Activated CD4-positive, alpha-beta T cell treated with anti-CD3 and anti-CD28 coated beads for 36 hours (primary cell): ENCODE measurements at regions of chr1 and their contacts with region 1.

Region 1: DNA sequence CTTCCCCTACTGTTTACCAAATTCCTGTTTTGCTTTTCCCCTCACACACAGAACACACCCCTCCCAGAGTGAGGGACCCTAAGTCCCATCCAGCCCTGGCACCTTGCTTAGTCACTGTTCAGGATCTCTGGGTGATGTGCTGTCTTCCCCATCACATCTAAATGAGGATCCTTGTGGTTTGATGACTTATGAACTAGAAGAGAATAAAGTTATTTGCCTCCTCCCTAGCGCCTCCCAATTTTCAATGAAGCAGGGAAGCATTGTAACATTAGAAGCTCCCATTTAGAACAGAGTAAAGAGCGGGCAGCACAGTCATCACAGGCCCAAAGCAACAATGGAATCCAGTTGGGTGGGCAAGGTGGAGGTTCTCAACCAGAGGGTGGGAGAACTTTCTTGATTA is 27.0 kb downstream of the DISC1 start:
- DNase-seq: no peak
- ATAC-seq: no peak
- H3K4me3 Mint-ChIP-seq: no peak overlapping the region
- H3K27ac Mint-ChIP-seq: no peak overlapping the region
- H3K4me1 Mint-ChIP-seq: peaks cover 37% of the 10 kb centered on the region
- H3K27me3 Mint-ChIP-seq: no peaks in the 10 kb centered on the region

Region 2: GRCh38 chr1:231643071-231643934 is 10.3 kb before region 1 on chr1:
- CTCF ChIA-PET with region 1: interaction called, 10 read pairs
- POLR2A ChIA-PET with region 1: no interaction called
- intact Hi-C with region 1: no loop called
- DNase-seq: no peak
- ATAC-seq: no peak
- H3K4me3 Mint-ChIP-seq: no peak overlapping the region
- H3K27ac Mint-ChIP-seq: no peak overlapping the region
- H3K4me1 Mint-ChIP-seq: peaks cover 16% of the 10 kb centered on the region
- H3K27me3 Mint-ChIP-seq: no peaks in the 10 kb centered on the region

Region 3: DNA sequence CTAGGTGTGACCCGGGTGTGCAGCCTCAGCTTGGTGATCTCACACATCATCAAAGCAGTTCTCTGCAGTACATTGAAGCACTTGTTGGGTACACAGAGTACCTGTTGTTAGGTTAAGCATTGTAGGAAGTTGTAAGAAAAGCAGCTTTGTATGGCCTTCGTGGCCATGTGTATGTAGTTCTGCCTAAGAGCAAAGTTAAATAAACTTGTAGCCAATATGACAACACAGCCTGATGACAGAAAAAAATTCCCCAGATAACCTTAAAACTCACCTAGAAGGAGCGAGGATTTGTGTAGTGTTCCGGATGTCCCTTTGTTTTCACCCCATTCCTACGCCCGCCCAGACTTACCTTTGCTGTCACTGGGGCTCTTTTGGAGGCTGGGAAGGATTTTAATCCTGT is 20.9 kb after region 1 on chr1:
- CTCF ChIA-PET with region 1: no interaction called
- POLR2A ChIA-PET with region 1: no interaction called
- intact Hi-C with region 1: no loop called
- DNase-seq: no peak
- ATAC-seq: peak; percentile 47
- H3K4me3 Mint-ChIP-seq: no peak overlapping the region
- H3K27ac Mint-ChIP-seq: no peak overlapping the region
- H3K4me1 Mint-ChIP-seq: peaks cover 25% of the 10 kb centered on the region
- H3K27me3 Mint-ChIP-seq: no peaks in the 10 kb centered on the region